ENCODE measurements at regions of chr15 and their contacts with region 1.

Region 1: GRCh38 chr15:50886140-50886467 is 22.4 kb upstream of the AP4E1 start:
- DNase-seq: no peak
- H3K4me3 Mint-ChIP-seq: peak overlapping the region; percentile 67
- H3K27ac Mint-ChIP-seq: peak overlapping the region; percentile 92
- H3K4me1 Mint-ChIP-seq: peaks cover 49% of the 10 kb centered on the region
- H3K27me3 Mint-ChIP-seq: no peaks in the 10 kb centered on the region

Region 2: GRCh38 chr15:50633653-50634052 is 252.5 kb before region 1 on chr15:
- intact Hi-C with region 1: loop called (anchors 5 kb)
- DNase-seq: no peak
- H3K4me3 Mint-ChIP-seq: no peak overlapping the region
- H3K27ac Mint-ChIP-seq: peak overlapping the region; percentile 44
- H3K4me1 Mint-ChIP-seq: peaks cover 14% of the 10 kb centered on the region
- H3K27me3 Mint-ChIP-seq: no peaks in the 10 kb centered on the region

Measured in activated T-helper 2 cell treated with anti-CD3 and anti-CD28 coated beads, Interferon-gamma antibody, Interleukin-2, Interleukin-4, amounts not matched to agents 10 μg/mL and 5 μg/mL and 100 μg/mL, durations not matched to agents 14 hours and 24 hours and 36 hours (primary cell).